ENCODE measurements at regions of chr3 and their contacts with region 1.

Region 1: DNA sequence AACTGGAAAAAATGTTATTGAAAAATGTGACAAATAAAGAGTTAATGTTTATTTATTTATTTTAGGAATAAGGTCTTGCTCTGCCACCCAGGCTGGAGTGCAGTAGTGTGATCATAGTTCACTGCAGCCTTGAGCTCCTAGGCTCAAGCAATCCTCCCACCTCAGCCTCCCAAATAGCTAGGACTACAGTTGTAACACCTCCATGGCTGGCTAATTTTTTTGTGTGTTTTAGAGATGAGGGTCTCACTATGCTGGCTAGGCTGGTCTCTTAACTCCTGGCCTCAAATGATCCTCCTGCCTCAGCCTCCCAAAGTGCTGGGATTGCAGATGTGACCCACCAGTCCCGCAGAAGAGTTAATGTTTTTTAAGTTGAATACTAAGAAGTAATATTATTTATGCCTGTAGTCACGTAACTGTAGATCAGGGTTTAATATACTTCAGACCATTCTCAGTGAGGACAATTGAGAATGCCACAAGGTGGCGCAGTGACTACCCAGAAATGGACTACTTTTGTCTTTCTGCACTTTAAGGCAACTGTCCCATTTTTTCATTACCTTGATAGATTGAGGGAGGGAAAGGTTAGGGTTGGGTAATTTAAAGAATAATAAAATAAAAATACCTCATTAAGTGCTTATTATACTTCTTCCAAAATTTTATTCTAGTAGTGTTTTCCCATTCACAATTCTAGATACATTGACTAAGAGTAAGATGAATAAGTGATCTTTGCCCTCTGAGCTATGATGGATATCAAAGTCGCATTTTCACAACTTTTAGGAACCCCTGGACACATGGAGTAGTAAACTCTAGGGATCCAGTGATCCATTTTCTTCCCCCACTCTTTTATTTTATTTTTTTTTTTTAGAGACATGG is 6.0 kb downstream of the MUC13 start:
- DNase-seq: no peak
- ATAC-seq: peak; percentile 80
- H3K4me3 ChIP-seq: no peak overlapping the region
- H3K27ac ChIP-seq: no peak overlapping the region
- H3K4me1 ChIP-seq: peaks cover 15% of the 10 kb centered on the region; the same call in 1 of the 2 replicates
- H3K27me3 ChIP-seq: no peaks in the 10 kb centered on the region
- CTCF ChIP-seq: peak; percentile 63 to 75 (median 64); a peak in 5 of 6 replicates
- EP300 ChIP-seq: no peak
- POLR2A ChIP-seq: no peak
- RAD21 ChIP-seq: peak; percentile 74

Region 2: DNA sequence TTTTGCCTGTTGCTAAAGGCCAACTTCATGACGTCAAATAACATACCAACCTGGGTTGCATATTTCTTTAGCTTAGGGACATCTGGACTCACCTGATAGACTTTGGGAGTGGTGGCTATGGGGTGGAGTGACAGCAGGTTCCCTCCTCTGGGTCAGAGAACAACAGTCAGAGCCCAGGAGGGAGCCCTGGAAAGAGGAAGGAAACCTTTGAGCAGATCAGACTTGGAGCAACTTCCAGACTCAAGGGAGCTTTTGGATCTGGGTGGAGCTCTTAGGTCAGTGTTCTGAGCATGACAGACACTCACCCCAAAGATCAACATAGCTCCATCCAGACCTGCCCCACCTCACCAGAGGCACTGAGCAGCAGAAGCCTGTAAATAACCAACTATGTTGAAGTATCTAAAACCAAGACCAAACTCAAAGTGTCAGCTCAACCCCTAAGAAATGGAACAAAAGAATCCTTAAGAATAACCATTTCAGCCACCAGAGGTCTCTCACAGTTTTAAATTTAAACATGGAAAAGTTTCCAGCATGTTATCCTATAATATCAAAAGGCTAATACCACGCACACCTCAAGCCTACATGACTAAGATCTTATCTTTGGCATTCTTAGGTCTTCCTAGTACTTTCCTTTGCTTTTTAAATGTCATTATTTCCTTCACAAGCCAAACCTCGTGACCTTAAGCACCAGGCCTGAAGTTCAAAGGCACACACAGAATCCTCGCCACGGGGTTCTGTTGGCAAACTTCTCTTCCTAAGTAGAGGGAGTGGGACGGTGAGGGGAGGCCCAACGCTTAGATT is 141.9 kb before region 1 on chr3:
- CTCF ChIA-PET with region 1: interaction called, 10 read pairs
- POLR2A ChIA-PET with region 1: no interaction called
- RAD21 ChIA-PET with region 1: interaction called, 3 read pairs
- SMC1A ChIA-PET with region 1: interaction called, 3 read pairs
- in situ Hi-C with region 1: no loop called
- intact Hi-C with region 1: no loop called
- DNase-seq: no peak
- ATAC-seq: no peak
- H3K4me3 ChIP-seq: no peak overlapping the region
- H3K27ac ChIP-seq: no peak overlapping the region
- H3K4me1 ChIP-seq: peaks cover 15% of the 10 kb centered on the region
- H3K27me3 ChIP-seq: no peaks in the 10 kb centered on the region
- CTCF ChIP-seq: peak in 1 of 3 experiments; percentile 18; a peak in 1 of 6 replicates
- EP300 ChIP-seq: no peak
- POLR2A ChIP-seq: no peak
- RAD21 ChIP-seq: no peak

Region 3: DNA sequence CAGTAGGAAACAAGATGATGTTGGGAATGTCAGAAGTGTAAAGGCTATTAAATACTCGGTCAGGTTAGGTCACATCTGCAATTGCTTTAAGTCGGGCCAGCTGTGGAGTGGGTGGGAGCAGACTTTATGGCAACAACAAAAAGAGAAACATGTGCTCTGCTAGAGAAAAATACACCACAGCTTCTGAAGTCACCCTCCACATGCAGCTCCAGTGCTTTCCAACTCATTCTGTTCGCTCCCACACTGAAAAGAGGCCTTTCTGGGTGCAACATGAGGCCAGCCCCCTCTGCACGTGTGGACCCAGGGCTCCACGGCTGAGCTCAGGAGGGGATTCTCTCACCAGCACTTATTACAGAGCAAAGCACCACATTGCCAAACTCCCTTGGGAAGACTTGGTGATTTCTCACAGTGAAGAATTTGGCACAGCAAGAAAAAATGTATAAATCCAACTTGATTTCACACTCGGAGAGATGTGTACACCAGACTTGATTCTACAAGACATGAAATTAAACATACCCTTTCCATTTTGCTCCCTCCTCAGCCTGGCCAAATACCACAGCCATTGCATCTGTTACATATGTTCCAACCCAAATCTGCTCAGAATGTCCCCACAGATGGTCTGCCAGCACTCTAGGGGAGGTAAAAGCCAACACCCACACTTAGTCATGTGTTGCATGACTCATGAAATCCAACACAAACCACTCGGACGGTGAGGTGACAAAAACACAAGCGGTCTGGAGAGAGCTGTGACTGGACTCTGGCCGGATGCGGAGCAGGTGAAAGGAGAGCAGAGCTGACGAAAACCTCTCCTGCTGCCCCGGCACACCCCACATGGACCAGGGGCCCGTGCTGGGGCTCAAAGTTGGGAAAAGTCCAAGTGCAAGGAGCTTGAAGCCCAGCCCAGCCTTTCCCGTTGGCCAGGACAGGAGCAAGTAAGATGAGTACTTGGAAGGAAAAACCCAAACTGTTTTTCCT is 116.0 kb before region 1 on chr3:
- CTCF ChIA-PET with region 1: no interaction called
- POLR2A ChIA-PET with region 1: no interaction called
- RAD21 ChIA-PET with region 1: no interaction called
- SMC1A ChIA-PET with region 1: no interaction called
- in situ Hi-C with region 1: no loop called
- intact Hi-C with region 1: no loop called
- DNase-seq: no peak
- ATAC-seq: peak; percentile 90
- H3K4me3 ChIP-seq: no peak overlapping the region
- H3K27ac ChIP-seq: no peak overlapping the region
- H3K4me1 ChIP-seq: no peaks in the 10 kb centered on the region
- H3K27me3 ChIP-seq: no peaks in the 10 kb centered on the region; a peak in 2 of 4 replicates
- CTCF ChIP-seq: no peak
- EP300 ChIP-seq: no peak
- POLR2A ChIP-seq: no peak
- RAD21 ChIP-seq: no peak

Region 4: DNA sequence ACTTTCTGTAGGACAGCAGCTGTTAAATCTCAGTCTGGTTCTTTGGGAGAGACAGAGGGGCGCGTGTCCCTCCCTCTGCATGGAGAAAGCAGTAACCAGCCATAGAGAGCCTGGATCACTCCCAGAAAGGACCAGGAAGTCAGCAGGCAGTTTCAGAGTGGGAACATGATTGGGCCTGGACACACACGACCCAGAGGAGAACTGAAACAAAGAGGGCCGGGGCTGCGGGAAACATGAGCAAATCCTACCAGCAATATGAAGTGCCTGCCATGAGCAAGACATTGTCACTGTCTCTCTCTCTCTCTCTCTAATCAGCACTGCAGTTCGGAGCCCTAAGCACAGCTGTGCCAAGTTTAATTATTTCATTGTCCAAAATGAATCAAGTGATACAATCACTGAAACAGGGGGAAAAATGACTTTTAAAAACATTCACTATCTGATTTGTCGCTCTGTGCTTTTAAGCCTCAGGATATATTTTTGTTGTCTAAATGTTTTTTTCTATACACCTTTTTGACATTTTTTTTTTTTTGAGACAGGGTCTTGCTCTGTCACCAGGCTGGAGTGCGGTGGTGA is 11.6 kb before region 1 on chr3:
- CTCF ChIA-PET with region 1: interaction called, 16 read pairs
- POLR2A ChIA-PET with region 1: no interaction called
- RAD21 ChIA-PET with region 1: no interaction called
- SMC1A ChIA-PET with region 1: interaction called, 4 read pairs
- in situ Hi-C with region 1: no loop called
- intact Hi-C with region 1: no loop called
- DNase-seq: no peak
- ATAC-seq: no peak
- H3K4me3 ChIP-seq: no peak overlapping the region
- H3K27ac ChIP-seq: no peak overlapping the region
- H3K4me1 ChIP-seq: no peaks in the 10 kb centered on the region
- H3K27me3 ChIP-seq: peaks cover 0 to 2% of the 10 kb centered on the region in 2 experiments; a peak in 1 of 4 replicates
- CTCF ChIP-seq: no peak
- EP300 ChIP-seq: no peak
- POLR2A ChIP-seq: no peak
- RAD21 ChIP-seq: no peak

Region 5: DNA sequence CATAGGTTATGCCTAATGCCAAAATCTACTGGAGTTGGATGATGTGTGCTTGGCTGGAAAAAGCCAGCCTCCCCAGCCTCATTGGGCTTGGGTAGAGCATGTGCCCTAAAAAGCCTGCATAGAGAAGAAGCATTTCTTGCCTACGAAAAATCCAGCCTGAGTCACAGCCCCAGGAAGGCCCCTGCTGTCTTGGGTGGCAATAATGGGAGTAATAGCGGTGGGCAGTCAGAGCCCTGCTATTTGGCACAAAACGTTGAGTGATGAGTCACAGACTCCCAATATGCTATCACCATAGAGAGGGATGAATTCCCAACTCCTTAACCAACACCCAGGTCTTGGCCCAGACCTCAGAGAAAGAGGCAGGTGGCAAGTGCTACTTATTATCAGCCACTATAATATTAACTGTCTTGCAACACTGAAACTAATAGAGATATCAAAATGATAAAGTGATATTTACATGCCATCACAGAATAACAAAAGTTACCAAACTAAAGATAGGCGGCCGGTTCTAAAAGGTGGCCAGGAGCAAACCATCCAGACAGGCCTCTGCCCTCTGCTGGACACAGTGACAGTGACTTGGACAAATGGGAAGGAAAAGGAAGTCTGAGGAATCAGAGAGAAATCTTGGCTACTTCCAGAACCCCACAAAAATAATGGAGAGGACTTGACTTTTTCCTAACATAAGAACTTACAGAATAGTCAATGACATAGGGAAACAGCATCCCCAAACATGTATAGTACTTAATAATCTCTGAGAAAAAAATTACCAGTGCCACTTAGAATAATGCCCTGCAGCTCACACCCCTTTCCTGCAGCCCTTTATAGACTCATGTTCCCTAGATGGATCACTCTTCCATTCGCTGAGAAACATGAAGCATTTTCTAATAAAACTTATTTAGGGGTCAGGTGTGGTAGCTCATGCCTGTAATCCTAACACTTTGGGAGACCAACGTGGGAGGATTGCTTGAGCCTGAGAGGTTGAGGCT is 57.9 kb after region 1 on chr3:
- CTCF ChIA-PET with region 1: interaction called, 18 read pairs
- POLR2A ChIA-PET with region 1: no interaction called
- RAD21 ChIA-PET with region 1: interaction called, 6 read pairs
- SMC1A ChIA-PET with region 1: interaction called, 6 read pairs
- in situ Hi-C with region 1: no loop called
- intact Hi-C with region 1: no loop called
- DNase-seq: no peak
- ATAC-seq: no peak
- H3K4me3 ChIP-seq: no peak overlapping the region
- H3K27ac ChIP-seq: no peak overlapping the region
- H3K4me1 ChIP-seq: no peaks in the 10 kb centered on the region
- H3K27me3 ChIP-seq: no peaks in the 10 kb centered on the region
- CTCF ChIP-seq: peak in 2 of 3 experiments; percentile 15 to 20; a peak in 3 of 6 replicates
- EP300 ChIP-seq: no peak
- POLR2A ChIP-seq: no peak
- RAD21 ChIP-seq: no peak

Region 6: GRCh38 chr3:125054449-125055329 is 126.1 kb after region 1 on chr3:
- CTCF ChIA-PET with region 1: interaction called, 10 read pairs
- POLR2A ChIA-PET with region 1: interaction called, 4 read pairs
- RAD21 ChIA-PET with region 1: interaction called, 39 read pairs
- SMC1A ChIA-PET with region 1: interaction called, 14 read pairs
- in situ Hi-C with region 1: no loop called
- intact Hi-C with region 1: no loop called
- DNase-seq: peak; percentile 62
- ATAC-seq: peak; percentile 61
- H3K4me3 ChIP-seq: peak overlapping the region; percentile 93
- H3K27ac ChIP-seq: peak overlapping the region; percentile 81
- H3K4me1 ChIP-seq: peaks cover 26% of the 10 kb centered on the region
- H3K27me3 ChIP-seq: no peaks in the 10 kb centered on the region
- CTCF ChIP-seq: no peak
- EP300 ChIP-seq: no peak
- POLR2A ChIP-seq: no peak
- RAD21 ChIP-seq: no peak

Region 7: GRCh38 chr3:125202197-125202596 is 273.6 kb after region 1 on chr3:
- CTCF ChIA-PET with region 1: interaction called, 15 read pairs
- POLR2A ChIA-PET with region 1: interaction called, 3 read pairs
- RAD21 ChIA-PET with region 1: interaction called, 13 read pairs
- SMC1A ChIA-PET with region 1: interaction called, 8 read pairs
- in situ Hi-C with region 1: no loop called
- intact Hi-C with region 1: loop called (anchors 2 kb)
- DNase-seq: no peak
- ATAC-seq: peak; percentile 66
- H3K4me3 ChIP-seq: no peak overlapping the region
- H3K27ac ChIP-seq: no peak overlapping the region
- H3K4me1 ChIP-seq: peaks cover 15% of the 10 kb centered on the region
- H3K27me3 ChIP-seq: no peaks in the 10 kb centered on the region
- CTCF ChIP-seq: peak; percentile 30 to 49 (median 39); a peak in 4 of 6 replicates
- EP300 ChIP-seq: no peak
- POLR2A ChIP-seq: no peak
- RAD21 ChIP-seq: peak; percentile 72

Measured in GM12878 (cell line).